ENCODE measurements at regions of chr2 and their contacts with region 1.

Region 1: GRCh38 chr2:99710721-99711120 is 220.9 kb upstream of the REV1 start:
- DNase-seq: peak in 2 of 5 donors; percentile 40 to 49
- ATAC-seq: peak; percentile 19 to 67 (median 48)
- H3K4me3 ChIP-seq: no peak overlapping the region
- H3K27ac ChIP-seq: peak overlapping the region in 8 of 12 donors; percentile 1 to 80 (median 66)
- H3K4me1 ChIP-seq: peaks cover 0 to 60% (median 21%) of the 10 kb centered on the region in 12 donors
- H3K27me3 ChIP-seq: no peaks in the 10 kb centered on the region
- CTCF ChIP-seq: no peak
- POLR2A ChIP-seq: no peak

Region 2: GRCh38 chr2:99569386-99569785 is 141.3 kb before region 1 on chr2:
- intact Hi-C with region 1: loop called in 1 of 10 experiments (anchors 10 kb)
- DNase-seq: no peak
- ATAC-seq: no peak
- H3K4me3 ChIP-seq: no peak overlapping the region
- H3K27ac ChIP-seq: no peak overlapping the region
- H3K4me1 ChIP-seq: peaks cover 0 to 14% (median 0%) of the 10 kb centered on the region in 12 donors
- H3K27me3 ChIP-seq: no peaks in the 10 kb centered on the region
- CTCF ChIP-seq: no peak
- POLR2A ChIP-seq: no peak

Region 3: GRCh38 chr2:99636144-99637034 is 74.3 kb before region 1 on chr2:
- intact Hi-C with region 1: loop called in 1 of 10 experiments (anchors 5 kb)
- DNase-seq: peak; percentile 88 to 95 (median 92)
- ATAC-seq: peak; percentile 94 to 97 (median 96)
- H3K4me3 ChIP-seq: no peak overlapping the region
- H3K27ac ChIP-seq: peak overlapping the region; percentile 27 to 84 (median 68)
- H3K4me1 ChIP-seq: peaks cover 0 to 36% (median 20%) of the 10 kb centered on the region in 12 donors
- H3K27me3 ChIP-seq: no peaks in the 10 kb centered on the region
- CTCF ChIP-seq: peak in 1 of 12 donors; percentile 16
- POLR2A ChIP-seq: no peak

Region 4: GRCh38 chr2:99662761-99663341 is 47.9 kb before region 1 on chr2:
- intact Hi-C with region 1: loop called in 1 of 10 experiments (anchors 5 kb)
- DNase-seq: peak in 3 of 5 donors; percentile 37 to 45 (median 43)
- ATAC-seq: peak; percentile 68 to 87 (median 82)
- H3K4me3 ChIP-seq: no peak overlapping the region
- H3K27ac ChIP-seq: peak overlapping the region in 11 of 12 donors; percentile 33 to 79 (median 49)
- H3K4me1 ChIP-seq: peaks cover 0 to 46% (median 22%) of the 10 kb centered on the region in 12 donors
- H3K27me3 ChIP-seq: no peaks in the 10 kb centered on the region
- CTCF ChIP-seq: no peak
- POLR2A ChIP-seq: no peak